Panc1 (cell line): ENCODE measurements at regions of chr19 and their contacts with region 1.

Region 1: DNA sequence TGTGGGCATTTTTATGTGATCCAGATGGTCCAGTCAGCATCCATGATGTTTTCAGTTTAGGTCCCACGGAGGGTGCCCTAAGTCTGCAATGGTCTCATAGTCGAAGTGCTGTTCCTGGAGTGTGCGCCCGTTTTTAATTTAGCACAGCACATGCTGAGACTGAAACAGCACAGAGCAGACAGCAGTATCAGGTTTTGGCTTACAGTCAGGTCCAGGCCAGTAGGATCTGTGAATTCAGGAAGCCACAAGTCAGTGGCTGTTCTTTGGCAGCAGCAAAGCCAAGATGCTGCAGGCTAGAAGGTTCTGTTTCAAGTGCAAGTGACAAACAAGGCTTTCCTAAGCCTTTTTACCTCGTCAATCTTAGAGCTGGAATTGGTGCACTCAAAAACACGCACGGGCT is 18.3 kb downstream of the FBXO27 start:
- DNase-seq: no peak
- ATAC-seq: peak; percentile 43
- H3K4me3 ChIP-seq: no peak overlapping the region
- H3K27ac ChIP-seq: no peak overlapping the region
- H3K4me1 ChIP-seq: no peaks in the 10 kb centered on the region
- H3K27me3 ChIP-seq: no peaks in the 10 kb centered on the region
- CTCF ChIP-seq: no peak

Region 2: DNA sequence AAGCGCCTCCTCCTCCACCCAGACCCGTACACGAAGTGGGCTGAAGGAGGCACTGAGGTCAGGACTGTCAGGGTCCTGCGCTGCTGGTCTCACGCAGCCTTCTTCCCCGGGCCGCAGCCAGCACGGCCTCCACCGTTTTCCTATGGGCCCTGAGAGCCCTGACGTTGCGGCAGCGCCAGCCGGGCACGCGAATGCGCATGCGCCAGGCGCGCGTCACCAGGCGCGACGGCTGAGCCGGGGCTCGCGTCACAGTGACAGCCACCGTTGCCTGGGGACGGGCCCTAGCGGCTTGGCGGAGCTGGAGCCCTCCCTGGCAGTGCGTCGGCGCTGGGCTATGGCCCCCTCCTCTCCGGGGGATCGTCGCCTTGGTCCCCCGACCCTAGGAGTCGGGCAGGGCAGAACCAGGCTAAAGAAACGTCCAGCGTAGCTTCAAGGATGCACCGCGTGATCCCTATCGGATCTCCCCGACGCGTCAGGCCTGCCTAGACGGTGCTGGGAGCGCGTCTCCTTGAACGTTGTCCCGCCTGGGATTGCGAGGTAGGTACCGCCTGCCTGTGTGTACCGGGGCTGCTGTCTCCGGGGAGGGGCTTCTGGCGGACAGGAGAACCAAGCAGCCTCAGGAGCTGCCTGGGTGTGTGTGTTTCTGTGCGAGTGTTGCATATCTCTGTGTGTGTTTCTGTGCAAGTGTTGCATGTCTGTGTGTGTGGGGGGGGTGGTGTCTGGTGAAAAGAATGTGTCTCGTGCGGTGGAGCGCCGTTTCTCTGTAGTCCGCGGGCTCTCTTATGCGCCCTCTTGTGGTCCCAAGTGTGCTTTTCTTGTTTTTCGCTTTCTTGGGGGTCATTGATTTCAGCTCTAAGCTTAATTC is 1462.7 kb before region 1 on chr19:
- CTCF ChIA-PET with region 1: no interaction called
- POLR2A ChIA-PET with region 1: no interaction called
- in situ Hi-C with region 1: no loop called
- intact Hi-C with region 1: no loop called
- DNase-seq: no peak
- ATAC-seq: no peak
- H3K4me3 ChIP-seq: peak overlapping the region in 1 of 2 experiments; percentile 13; a peak in 1 of 4 replicates
- H3K27ac ChIP-seq: no peak overlapping the region
- H3K4me1 ChIP-seq: no peaks in the 10 kb centered on the region
- H3K27me3 ChIP-seq: no peaks in the 10 kb centered on the region
- CTCF ChIP-seq: no peak

Region 3: GRCh38 chr19:38433268-38433733 is 580.7 kb before region 1 on chr19 and contains the start of gene RYR1:
- CTCF ChIA-PET with region 1: no interaction called
- POLR2A ChIA-PET with region 1: no interaction called
- in situ Hi-C with region 1: no loop called
- intact Hi-C with region 1: no loop called
- DNase-seq: no peak
- ATAC-seq: peak; percentile 66; the same call in 1 of the 2 replicates
- H3K4me3 ChIP-seq: no peak within 1 kb of the TSS
- H3K27ac ChIP-seq: no peak within 1 kb of the TSS
- H3K4me1 ChIP-seq: no peaks in the 10 kb centered on the region
- H3K27me3 ChIP-seq: no peaks in the 10 kb centered on the region
- CTCF ChIP-seq: no peak
- total RNA-seq, gene RYR1: 34.2 TPM

Region 4: GRCh38 chr19:38869856-38870607 is 144.0 kb before region 1 on chr19:
- CTCF ChIA-PET with region 1: no interaction called
- POLR2A ChIA-PET with region 1: no interaction called
- in situ Hi-C with region 1: no loop called
- intact Hi-C with region 1: no loop called
- DNase-seq: no peak
- ATAC-seq: peak; percentile 44
- H3K4me3 ChIP-seq: no peak overlapping the region
- H3K27ac ChIP-seq: no peak overlapping the region
- H3K4me1 ChIP-seq: no peaks in the 10 kb centered on the region
- H3K27me3 ChIP-seq: no peaks in the 10 kb centered on the region
- CTCF ChIP-seq: no peak

Region 5: GRCh38 chr19:39046118-39046821 is 32.2 kb after region 1 on chr19:
- CTCF ChIA-PET with region 1: no interaction called
- POLR2A ChIA-PET with region 1: interaction called, 10 read pairs
- in situ Hi-C with region 1: no loop called
- intact Hi-C with region 1: no loop called
- DNase-seq: no peak
- ATAC-seq: peak; percentile 80
- H3K4me3 ChIP-seq: no peak overlapping the region
- H3K27ac ChIP-seq: no peak overlapping the region
- H3K4me1 ChIP-seq: peaks cover 7% of the 10 kb centered on the region; the same call in 1 of the 2 replicates
- H3K27me3 ChIP-seq: no peaks in the 10 kb centered on the region
- CTCF ChIP-seq: no peak

Region 6: GRCh38 chr19:40190891-40191835 is 1177.1 kb after region 1 on chr19 and contains the start of gene MAP3K10:
- CTCF ChIA-PET with region 1: no interaction called
- POLR2A ChIA-PET with region 1: interaction called, 12 read pairs
- in situ Hi-C with region 1: no loop called
- intact Hi-C with region 1: no loop called
- DNase-seq: peak; percentile 99
- ATAC-seq: peak; percentile 97
- H3K4me3 ChIP-seq: peak within 1 kb of the TSS; percentile 36 to 57
- H3K27ac ChIP-seq: peak within 1 kb of the TSS; percentile 49
- H3K4me1 ChIP-seq: peaks cover 23% of the 10 kb centered on the region
- H3K27me3 ChIP-seq: peaks cover 9% of the 10 kb centered on the region
- CTCF ChIP-seq: no peak
- total RNA-seq, gene MAP3K10: 255 TPM